ENCODE measurements at regions of chr20 and their contacts with region 1.

Region 1: GRCh38 chr20:53547664-53548239 is 45.9 kb downstream of the ZNF217 start:
- DNase-seq: peak; percentile 26
- H3K4me3 ChIP-seq: no peak overlapping the region
- H3K27ac ChIP-seq: no peak overlapping the region
- H3K4me1 ChIP-seq: no peaks in the 10 kb centered on the region
- H3K27me3 ChIP-seq: no peaks in the 10 kb centered on the region
- CTCF ChIP-seq: peak; percentile 23 to 73 (median 72)
- POLR2A ChIP-seq: no peak

Region 2: DNA sequence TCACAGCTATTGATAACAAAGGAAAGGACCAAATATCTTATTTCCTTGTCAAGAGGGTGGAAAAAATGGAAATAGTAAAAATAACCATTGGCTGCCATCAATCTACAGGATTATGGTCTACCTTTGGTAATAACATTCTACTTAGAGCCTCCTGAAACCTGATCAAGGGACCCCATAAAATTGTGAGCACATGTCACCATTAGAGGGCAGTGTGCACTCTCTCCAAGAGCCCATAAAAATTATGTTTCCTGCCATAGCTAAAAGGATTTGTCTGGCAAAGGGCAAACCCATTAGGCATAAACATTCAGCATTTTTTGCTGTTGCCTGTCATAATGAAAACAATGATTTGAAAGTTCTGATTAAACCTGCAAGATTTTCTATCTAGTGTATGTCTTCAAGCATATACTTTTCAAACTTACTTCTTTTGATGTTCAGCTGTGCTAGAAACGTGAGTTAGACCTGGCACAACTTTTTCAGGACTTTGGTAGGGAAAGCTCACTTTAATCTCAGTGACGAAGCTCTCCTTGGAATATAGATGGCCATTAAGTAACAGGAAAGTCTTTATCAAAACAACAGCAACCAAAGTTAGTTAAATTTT is 1235.5 kb before region 1 on chr20:
- intact Hi-C with region 1: loop called (anchors 5 kb)
- DNase-seq: peak; percentile 45
- H3K4me3 ChIP-seq: no peak overlapping the region
- H3K27ac ChIP-seq: no peak overlapping the region
- H3K4me1 ChIP-seq: no peaks in the 10 kb centered on the region
- H3K27me3 ChIP-seq: no peaks in the 10 kb centered on the region
- CTCF ChIP-seq: peak; percentile 33 to 62 (median 60)
- POLR2A ChIP-seq: no peak

Region 3: DNA sequence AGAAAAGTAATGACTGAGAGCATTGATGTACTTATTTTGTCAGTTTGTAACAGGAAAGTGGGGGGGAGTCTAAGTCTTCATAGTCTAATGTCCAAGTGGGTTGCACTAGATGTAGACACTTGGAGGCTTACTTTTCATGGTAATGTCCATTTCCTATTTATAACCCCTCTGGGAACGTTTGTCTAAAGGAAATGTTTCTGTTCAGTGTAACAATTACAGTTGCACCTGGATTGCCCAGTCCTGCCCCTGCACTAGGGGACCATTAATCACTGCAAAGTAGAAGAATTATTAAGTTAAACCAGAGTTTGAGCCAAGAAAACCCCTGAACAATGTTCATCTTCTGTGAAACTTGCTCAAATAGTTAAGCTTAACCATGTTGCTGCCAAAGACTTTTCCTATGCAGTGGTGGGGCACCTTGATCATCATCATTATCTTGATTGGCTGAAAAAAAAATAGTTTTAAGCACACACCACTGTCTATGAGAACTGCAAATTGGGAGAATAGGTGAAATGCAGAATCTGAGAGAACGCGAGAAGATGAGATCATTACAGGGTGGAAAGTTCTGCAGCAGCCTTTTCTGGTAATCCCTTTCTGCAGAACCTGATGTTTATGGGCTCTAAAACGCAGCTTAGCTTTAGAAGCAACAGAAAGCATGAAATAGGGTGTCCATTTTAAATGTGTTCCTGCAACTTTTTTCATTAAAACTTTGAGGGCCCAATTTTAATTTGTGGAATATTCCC is 60.1 kb before region 1 on chr20:
- intact Hi-C with region 1: no loop called
- DNase-seq: no peak
- H3K4me3 ChIP-seq: no peak overlapping the region
- H3K27ac ChIP-seq: no peak overlapping the region
- H3K4me1 ChIP-seq: no peaks in the 10 kb centered on the region
- H3K27me3 ChIP-seq: no peaks in the 10 kb centered on the region
- CTCF ChIP-seq: no peak
- POLR2A ChIP-seq: no peak

Measured in prostate gland (tissue), 2 donors.